Aorta (tissue), 5 donors: ENCODE measurements at regions of chr2 and their contacts with region 1.

Region 1: DNA sequence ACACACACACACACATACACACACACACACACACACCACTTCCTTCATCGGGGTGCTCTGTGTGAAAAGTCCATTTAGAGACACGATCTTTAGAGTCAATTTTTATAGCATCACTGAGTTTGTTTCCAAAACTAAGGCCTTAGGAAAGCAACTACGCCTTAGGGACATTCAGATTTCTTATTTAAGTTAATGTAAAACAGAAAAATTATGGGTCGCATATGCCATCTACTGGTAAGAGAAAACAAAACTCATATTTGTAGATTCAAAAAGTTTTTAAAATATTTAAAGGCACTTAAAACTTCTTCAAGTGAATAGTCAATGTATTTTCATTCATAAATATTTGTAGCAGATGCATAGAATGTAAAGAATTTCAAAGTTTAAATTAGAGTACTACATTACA is 166.2 kb downstream of the ATAD2B start:
- DNase-seq: no peak
- ATAC-seq: no peak
- H3K4me3 ChIP-seq: no peak overlapping the region
- H3K27ac ChIP-seq: no peak overlapping the region
- H3K4me1 ChIP-seq: no peaks in the 10 kb centered on the region
- H3K27me3 ChIP-seq: no peaks in the 10 kb centered on the region

Region 2: GRCh38 chr2:23157812-23158211 is 602.9 kb before region 1 on chr2:
- intact Hi-C with region 1: no loop called
- DNase-seq: no peak
- ATAC-seq: no peak
- H3K4me3 ChIP-seq: no peak overlapping the region
- H3K27ac ChIP-seq: no peak overlapping the region
- H3K4me1 ChIP-seq: peaks cover 0 to 2% of the 10 kb centered on the region in 2 donors
- H3K27me3 ChIP-seq: no peaks in the 10 kb centered on the region

Region 3: GRCh38 chr2:23360571-23361125 is 400.1 kb before region 1 on chr2:
- intact Hi-C with region 1: loop called in 1 of 2 experiments (anchors 10 kb)
- DNase-seq: no peak
- ATAC-seq: no peak
- H3K4me3 ChIP-seq: no peak overlapping the region
- H3K27ac ChIP-seq: no peak overlapping the region
- H3K4me1 ChIP-seq: no peaks in the 10 kb centered on the region
- H3K27me3 ChIP-seq: no peaks in the 10 kb centered on the region

Region 4: GRCh38 chr2:23375448-23375847 is 385.3 kb before region 1 on chr2:
- intact Hi-C with region 1: loop called in 1 of 2 experiments (anchors 10 kb)
- DNase-seq: no peak
- ATAC-seq: no peak
- H3K4me3 ChIP-seq: no peak overlapping the region
- H3K27ac ChIP-seq: no peak overlapping the region
- H3K4me1 ChIP-seq: no peaks in the 10 kb centered on the region
- H3K27me3 ChIP-seq: no peaks in the 10 kb centered on the region

Region 5: DNA sequence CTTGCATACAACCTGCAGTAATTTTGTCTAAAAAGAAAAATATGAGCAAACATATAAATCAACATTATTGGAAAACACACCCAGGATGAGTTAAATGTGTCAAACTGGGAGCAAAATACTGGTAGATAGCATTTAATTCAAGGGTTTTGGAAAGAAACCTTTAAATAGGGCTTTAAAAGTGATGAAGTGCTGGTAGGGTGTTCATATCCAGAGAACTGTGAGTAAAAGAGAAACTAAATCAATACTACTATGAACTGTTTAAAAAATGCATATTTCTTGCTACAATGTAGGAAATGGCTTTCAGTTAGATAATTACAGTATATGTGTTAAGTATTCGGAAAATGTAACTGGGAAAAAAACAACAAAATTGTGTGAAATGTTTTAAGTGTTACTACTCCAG is 48.4 kb after region 1 on chr2:
- intact Hi-C with region 1: no loop called
- DNase-seq: no peak
- ATAC-seq: no peak
- H3K4me3 ChIP-seq: no peak overlapping the region
- H3K27ac ChIP-seq: no peak overlapping the region
- H3K4me1 ChIP-seq: no peaks in the 10 kb centered on the region
- H3K27me3 ChIP-seq: no peaks in the 10 kb centered on the region